PC-9 (cell line): ENCODE measurements at regions of chr10 and their contacts with region 1.

Region 1: DNA sequence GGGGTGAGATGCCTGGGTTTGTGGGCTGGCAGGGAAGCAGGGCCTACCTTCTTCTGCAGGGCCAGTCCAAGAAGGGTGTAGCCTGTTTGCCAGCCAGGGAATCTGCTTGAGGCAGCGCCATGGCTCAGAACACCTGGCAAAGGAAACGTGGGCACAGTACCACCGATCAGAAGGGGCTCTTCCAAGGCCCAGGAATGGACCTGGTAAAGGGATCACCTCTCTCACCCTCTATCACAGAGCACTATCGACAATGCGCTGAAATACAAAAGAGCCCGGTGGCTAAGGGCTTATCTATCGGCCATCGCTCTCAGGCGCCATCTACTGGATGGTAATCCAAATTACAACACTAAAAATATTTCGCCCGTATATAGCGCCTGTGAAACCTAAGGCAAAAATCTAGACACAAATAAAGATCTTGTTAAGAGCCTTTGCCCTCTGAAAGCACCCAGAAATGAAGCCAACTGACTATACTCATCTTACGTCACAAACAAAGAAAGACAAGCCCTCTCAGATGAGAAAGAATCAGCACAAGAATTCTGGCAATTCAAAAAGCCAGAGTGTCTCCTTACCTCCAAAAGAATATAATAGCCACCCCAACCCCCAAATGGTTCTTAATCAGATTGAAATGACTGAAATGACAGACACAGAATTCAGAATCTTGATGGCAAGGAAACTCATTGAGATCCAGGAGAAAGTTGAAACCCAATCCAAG is 217.8 kb upstream of the HPS1 start:
- DNase-seq: no peak
- H3K4me3 ChIP-seq: no peak overlapping the region
- H3K27ac ChIP-seq: no peak overlapping the region
- H3K4me1 ChIP-seq: no peaks in the 10 kb centered on the region
- H3K27me3 ChIP-seq: no peaks in the 10 kb centered on the region
- CTCF ChIP-seq: peak; percentile 64

Region 2: GRCh38 chr10:98242823-98243222 is 421.7 kb before region 1 on chr10:
- CTCF ChIA-PET with region 1: no interaction called
- POLR2A ChIA-PET with region 1: no interaction called
- intact Hi-C with region 1: loop called (anchors 5 kb)
- DNase-seq: no peak
- H3K4me3 ChIP-seq: no peak overlapping the region
- H3K27ac ChIP-seq: no peak overlapping the region
- H3K4me1 ChIP-seq: no peaks in the 10 kb centered on the region
- H3K27me3 ChIP-seq: no peaks in the 10 kb centered on the region
- CTCF ChIP-seq: peak; percentile 68

Region 3: GRCh38 chr10:99303899-99304861 is 639.7 kb after region 1 on chr10:
- CTCF ChIA-PET with region 1: no interaction called
- POLR2A ChIA-PET with region 1: no interaction called
- intact Hi-C with region 1: no loop called
- DNase-seq: no peak
- H3K4me3 ChIP-seq: no peak overlapping the region
- H3K27ac ChIP-seq: no peak overlapping the region
- H3K4me1 ChIP-seq: no peaks in the 10 kb centered on the region
- H3K27me3 ChIP-seq: peaks cover 8% of the 10 kb centered on the region; the same call in 1 of the 2 replicates
- CTCF ChIP-seq: no peak